ENCODE measurements at regions of chr21 and their contacts with region 1.

Region 1: DNA sequence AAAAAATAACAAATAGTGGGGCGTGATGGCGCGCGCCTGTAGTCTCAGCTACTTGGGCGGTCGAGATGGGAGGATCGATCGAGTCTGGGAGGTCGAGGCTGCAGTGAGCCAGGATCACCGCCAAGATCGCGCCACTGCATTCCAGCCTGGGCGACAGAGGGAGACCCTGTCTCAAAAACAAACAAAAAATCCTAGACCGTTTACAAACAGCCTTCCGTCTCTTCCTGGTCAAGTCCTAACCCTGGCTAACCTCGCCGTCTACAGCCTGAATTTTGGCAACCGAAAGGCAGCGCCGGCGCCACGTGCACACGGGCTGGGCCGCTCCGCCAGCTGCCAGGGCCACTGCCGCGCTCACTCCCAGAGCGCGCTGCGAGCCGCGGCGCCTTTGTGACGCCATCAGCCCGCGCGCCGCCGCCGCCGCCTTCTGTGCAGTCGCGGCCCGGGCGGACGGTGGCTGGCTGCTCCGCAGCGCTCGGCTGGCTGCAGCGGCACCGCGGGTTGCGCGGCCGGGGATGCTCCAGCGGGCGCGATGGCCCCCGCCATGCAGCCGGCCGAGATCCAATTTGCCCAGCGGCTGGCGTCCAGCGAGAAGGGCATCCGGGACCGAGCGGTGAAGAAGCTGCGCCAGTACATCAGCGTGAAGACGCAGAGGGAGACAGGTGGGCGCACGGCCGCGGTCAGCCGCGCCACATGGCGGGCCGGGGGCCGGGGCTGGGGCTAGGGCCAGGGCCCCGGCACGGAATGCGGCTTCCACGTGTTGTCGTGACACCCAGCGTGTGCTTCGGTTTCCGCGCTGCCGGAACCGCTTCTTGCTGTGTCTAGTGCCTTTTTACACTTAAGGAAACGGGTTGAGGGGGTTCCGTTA is at the starts of genes HSF2BP and RRP1B:
- DNase-seq: peak; percentile 84 to 96 (median 94)
- ATAC-seq: peak; percentile 88 to 95
- H3K4me3 ChIP-seq: peak within 1 kb of the TSS; percentile 72
- H3K27ac ChIP-seq: peak within 1 kb of the TSS; percentile 78
- H3K4me1 ChIP-seq: peaks cover 4% of the 10 kb centered on the region
- H3K27me3 ChIP-seq: no peaks in the 10 kb centered on the region
- total RNA-seq, gene HSF2BP: 0.21 to 0.42 (median 0.38) TPM
- total RNA-seq, gene RRP1B: 10.5 to 12.5 (median 11.5) TPM

Region 2: DNA sequence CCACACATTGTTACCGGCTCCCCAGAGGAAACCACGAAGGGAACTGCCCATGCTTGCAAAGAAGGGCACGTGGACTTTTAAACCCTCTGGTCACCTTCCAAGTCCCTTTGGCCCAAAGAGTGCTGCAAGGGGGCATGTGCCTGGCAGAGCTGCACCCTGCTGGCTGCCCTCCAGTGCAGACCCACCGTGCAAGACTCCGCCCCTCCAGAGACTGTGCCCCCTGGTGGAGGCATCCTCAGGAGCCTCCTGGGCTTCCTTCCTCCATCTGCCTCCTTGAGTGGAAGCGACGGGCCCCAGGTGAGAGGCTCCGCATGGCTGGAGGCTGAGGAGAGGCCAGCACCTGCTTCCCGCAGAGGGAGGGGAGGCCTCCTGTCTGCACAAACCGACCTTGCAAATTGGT is 389.9 kb before region 1 on chr21:
- intact Hi-C with region 1: no loop called
- DNase-seq: peak; percentile 8 to 50 (median 45)
- ATAC-seq: no peak
- H3K4me3 ChIP-seq: no peak overlapping the region
- H3K27ac ChIP-seq: no peak overlapping the region
- H3K4me1 ChIP-seq: peaks cover 3% of the 10 kb centered on the region
- H3K27me3 ChIP-seq: no peaks in the 10 kb centered on the region

Region 3: DNA sequence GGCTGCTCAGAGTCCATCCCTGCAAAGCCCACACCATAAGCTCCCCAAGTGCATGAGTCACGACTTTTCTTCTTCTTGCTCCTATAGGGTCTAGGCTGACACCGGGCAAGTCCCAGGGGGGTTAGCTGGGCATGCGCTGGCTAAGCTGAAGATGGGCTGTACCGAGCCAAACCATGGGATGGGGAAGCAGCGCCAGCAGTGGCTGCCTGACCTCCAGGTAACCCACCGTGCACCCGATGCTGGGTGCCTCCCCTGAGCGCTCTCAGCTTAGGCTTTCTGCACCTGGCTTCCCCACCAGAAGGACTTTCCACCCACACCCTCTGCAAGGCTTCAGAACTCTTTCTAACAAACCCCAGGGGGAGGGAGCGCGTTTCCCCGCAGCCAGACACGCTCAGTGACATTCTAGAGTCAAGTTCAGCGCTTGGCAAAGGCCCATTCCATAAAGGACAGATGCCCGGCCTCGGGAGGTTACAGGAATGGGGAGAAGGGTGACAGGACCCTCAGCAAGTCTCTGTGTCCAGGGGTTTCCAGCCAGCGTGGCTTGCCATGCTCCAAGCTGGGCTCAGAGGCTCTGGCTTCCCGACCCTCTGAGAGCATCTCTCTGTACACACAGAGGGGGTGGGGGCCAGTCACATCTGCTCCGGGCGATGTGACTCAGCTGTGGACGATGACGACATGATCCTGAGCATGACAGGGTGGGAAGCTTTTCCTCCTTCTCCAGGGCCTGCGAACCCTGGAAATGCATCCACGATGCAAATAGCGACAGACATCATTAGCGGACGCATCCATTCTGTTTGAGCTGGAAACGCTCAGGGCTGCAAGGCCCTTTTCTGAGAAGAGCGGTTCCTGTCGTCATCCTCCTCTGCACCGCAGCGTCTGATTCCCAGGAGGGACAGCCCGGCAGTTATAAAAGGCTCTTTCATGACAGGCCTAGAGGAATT is 340.3 kb before region 1 on chr21:
- intact Hi-C with region 1: loop called in 1 of 4 experiments (anchors 10 kb)
- DNase-seq: peak; percentile 51 to 57 (median 57)
- ATAC-seq: peak in 1 of 2 donors; percentile 62
- H3K4me3 ChIP-seq: no peak overlapping the region
- H3K27ac ChIP-seq: no peak overlapping the region
- H3K4me1 ChIP-seq: no peaks in the 10 kb centered on the region
- H3K27me3 ChIP-seq: no peaks in the 10 kb centered on the region

Region 4: DNA sequence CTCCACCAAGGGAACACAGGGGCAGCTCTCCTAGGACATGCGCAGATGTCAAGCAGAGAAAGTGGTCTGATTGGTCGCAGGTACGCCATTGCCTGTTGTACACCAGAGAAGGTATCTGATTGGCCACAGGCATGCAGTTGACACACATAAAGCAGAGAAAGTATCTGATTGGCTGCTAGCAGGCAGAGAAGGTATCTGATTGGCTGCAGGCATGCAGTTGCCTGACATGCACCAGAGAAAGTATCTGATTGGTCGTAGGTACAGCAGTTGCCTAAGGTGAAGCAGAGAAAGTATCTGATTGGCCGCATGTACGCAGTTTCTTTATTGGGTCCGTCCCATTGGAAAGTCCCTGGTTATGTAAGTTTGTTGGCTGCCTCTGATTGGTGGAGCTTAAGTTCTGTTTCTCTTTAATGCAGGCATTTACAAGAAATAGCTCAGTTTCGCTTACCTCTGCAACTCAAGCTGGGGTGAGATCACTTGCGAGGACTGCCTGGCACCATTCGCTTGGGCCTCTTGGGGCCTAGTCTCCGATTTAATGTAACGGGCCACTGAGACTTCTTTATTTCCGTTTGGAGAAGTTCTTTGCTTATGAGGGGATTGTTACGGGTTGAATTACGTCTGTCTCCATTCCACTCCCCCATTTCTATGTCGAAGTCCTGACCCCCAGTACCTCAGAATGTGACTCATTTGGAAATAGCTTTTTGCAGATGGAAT is 306.6 kb before region 1 on chr21:
- intact Hi-C with region 1: loop called in 1 of 4 experiments (anchors 10 kb)
- DNase-seq: peak in 1 of 3 donors; percentile 20
- ATAC-seq: no peak
- H3K4me3 ChIP-seq: no peak overlapping the region
- H3K27ac ChIP-seq: no peak overlapping the region
- H3K4me1 ChIP-seq: peaks cover 2% of the 10 kb centered on the region
- H3K27me3 ChIP-seq: no peaks in the 10 kb centered on the region

Measured in right cardiac atrium (tissue), 5 donors.